ENCODE measurements at regions of chr17 and their contacts with region 1.

Region 1: GRCh38 chr17:59361916-59362810 is 30.7 kb downstream of the YPEL2 start:
- DNase-seq: no peak
- ATAC-seq: peak; percentile 53
- H3K4me3 Mint-ChIP-seq: peak overlapping the region; percentile 52
- H3K27ac Mint-ChIP-seq: peak overlapping the region; percentile 82
- H3K4me1 Mint-ChIP-seq: peaks cover 75% of the 10 kb centered on the region
- H3K27me3 Mint-ChIP-seq: no peaks in the 10 kb centered on the region

Region 2: GRCh38 chr17:59219370-59219769 is 142.8 kb before region 1 on chr17:
- POLR2A ChIA-PET with region 1: no interaction called
- DNase-seq: no peak
- ATAC-seq: no peak
- H3K4me3 Mint-ChIP-seq: peak overlapping the region; percentile 99
- H3K27ac Mint-ChIP-seq: no peak overlapping the region
- H3K4me1 Mint-ChIP-seq: peaks cover 9% of the 10 kb centered on the region
- H3K27me3 Mint-ChIP-seq: no peaks in the 10 kb centered on the region

Region 3: DNA sequence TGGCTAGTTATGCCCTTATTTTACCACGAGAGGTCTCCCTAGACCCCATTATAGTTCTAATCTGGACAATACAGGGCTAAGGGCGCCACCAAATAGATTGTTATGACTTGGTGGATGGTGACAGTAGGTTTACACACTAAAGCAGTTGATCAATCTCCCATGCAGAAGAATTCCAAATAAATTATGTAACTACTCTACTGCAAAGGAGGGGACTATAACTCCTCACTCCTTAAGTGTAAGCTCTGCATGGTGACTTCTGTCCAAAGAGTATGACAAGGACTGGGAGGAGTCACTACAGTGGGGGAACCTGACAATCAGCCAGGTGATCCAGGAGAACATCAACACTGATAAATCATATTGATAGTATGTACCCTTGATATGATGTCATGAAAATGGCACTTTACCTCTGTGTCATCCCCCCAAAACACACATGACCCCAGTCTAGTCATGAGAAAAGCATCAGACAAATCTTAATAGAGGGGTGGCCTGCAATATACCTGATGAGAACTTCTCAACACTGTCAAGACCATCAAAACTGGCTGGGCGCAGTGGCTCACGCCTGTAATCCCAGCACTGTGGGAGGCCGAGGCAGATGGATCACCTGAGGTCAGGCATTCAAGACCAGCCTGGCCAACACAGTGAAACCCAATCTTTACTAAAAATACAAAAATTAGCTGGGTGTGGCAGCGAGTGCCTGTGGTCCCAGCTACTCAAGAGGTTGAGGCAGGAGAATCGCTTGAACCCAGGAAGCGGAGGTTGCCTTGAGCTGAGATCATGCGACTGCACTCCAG is 50.8 kb before region 1 on chr17:
- POLR2A ChIA-PET with region 1: no interaction called
- DNase-seq: no peak
- ATAC-seq: peak; percentile 96
- H3K4me3 Mint-ChIP-seq: no peak overlapping the region
- H3K27ac Mint-ChIP-seq: no peak overlapping the region
- H3K4me1 Mint-ChIP-seq: peaks cover 7% of the 10 kb centered on the region
- H3K27me3 Mint-ChIP-seq: peaks cover under 1% of the 10 kb centered on the region

Region 4: GRCh38 chr17:59372138-59372857 is 10.1 kb after region 1 on chr17:
- POLR2A ChIA-PET with region 1: interaction called, 21 read pairs
- DNase-seq: no peak
- ATAC-seq: peak; percentile 28
- H3K4me3 Mint-ChIP-seq: peak overlapping the region; percentile 13
- H3K27ac Mint-ChIP-seq: peak overlapping the region; percentile 63
- H3K4me1 Mint-ChIP-seq: peaks cover 57% of the 10 kb centered on the region
- H3K27me3 Mint-ChIP-seq: no peaks in the 10 kb centered on the region

Region 5: DNA sequence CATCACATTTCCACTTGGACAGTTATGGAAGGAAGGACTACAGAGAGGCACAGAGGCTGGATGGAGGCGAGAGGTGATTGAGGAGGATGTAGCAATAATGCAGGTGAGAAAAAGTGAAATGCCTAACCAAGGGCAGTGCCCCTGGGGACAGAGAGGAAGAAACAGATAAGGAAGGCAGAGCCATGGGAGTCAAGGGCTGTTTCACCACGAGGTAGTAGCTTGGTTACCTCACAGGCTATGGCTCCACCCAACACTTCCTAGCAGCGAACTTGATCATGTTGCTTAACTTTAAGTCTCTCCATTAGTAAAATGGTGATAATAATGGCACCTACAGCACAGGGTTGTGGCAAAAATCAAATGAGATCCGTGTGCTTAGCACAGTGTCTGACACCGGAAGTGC is 53.2 kb after region 1 on chr17:
- POLR2A ChIA-PET with region 1: interaction called, 19 read pairs
- DNase-seq: no peak
- ATAC-seq: no peak
- H3K4me3 Mint-ChIP-seq: peak overlapping the region; percentile 69
- H3K27ac Mint-ChIP-seq: peak overlapping the region; percentile 92
- H3K4me1 Mint-ChIP-seq: peaks cover 62% of the 10 kb centered on the region
- H3K27me3 Mint-ChIP-seq: no peaks in the 10 kb centered on the region